HepG2 (cell line): ENCODE measurements at regions of chr1 and their contacts with region 1.

Region 1: GRCh38 chr1:152917794-152918193 is 9.4 kb downstream of the IVL start:
- DNase-seq: peak; percentile 30
- ATAC-seq: peak; percentile 40; the same call in 1 of the 3 replicates
- H3K4me3 ChIP-seq: no peak overlapping the region
- H3K27ac ChIP-seq: no peak overlapping the region
- H3K4me1 ChIP-seq: no peaks in the 10 kb centered on the region
- H3K27me3 ChIP-seq: 0 out of 5 replicates have a peak, but pooled peaks cover 0 to 2% of the 10 kb centered on the region in 2 experiments
- CTCF ChIP-seq: peak; percentile 53
- EP300 ChIP-seq: no peak
- POLR2A ChIP-seq: no peak
- RAD21 ChIP-seq: no peak

Region 2: DNA sequence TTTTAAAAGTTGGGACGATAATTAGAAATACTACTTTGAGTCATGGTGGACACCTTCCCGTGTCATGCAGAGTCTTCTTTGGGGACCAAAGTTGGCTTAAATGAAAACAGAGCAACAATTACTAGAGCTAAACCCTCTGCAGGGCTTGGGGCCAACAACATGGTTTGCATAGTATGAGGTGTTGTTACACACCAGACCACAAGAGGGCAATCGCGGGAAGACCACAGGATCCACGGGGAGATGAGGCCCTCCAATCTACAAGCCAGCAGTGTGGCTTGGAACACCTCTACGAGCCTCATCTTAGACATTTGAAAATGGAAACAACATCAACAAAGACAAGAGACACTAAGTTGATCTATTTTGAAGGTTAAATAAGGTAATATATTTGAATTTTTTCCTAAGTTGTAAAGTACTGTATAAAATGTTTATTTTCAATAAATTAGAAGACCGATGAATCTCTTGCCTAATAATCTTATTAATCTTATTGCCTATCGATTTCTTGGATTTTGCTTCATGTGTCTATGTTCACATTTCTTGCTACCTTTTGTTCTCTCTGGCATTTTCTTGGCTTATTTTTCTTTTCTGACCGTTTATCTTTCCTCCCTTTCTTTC is 47.9 kb before region 1 on chr1:
- CTCF ChIA-PET with region 1: no interaction called
- POLR2A ChIA-PET with region 1: no interaction called
- in situ Hi-C with region 1: no loop called
- intact Hi-C with region 1: no loop called
- DNase-seq: peak; percentile 60
- ATAC-seq: peak; percentile 83
- H3K4me3 ChIP-seq: no peak overlapping the region
- H3K27ac ChIP-seq: no peak overlapping the region
- H3K4me1 ChIP-seq: no peaks in the 10 kb centered on the region
- H3K27me3 ChIP-seq: no peaks in the 10 kb centered on the region
- CTCF ChIP-seq: peak; percentile 79
- EP300 ChIP-seq: no peak
- POLR2A ChIP-seq: no peak
- RAD21 ChIP-seq: peak; percentile 13; the same call in 1 of the 2 replicates

Region 3: GRCh38 chr1:153192697-153193096 is 274.9 kb after region 1 on chr1:
- CTCF ChIA-PET with region 1: no interaction called
- POLR2A ChIA-PET with region 1: no interaction called
- in situ Hi-C with region 1: no loop called
- intact Hi-C with region 1: loop called (anchors 2 kb)
- DNase-seq: peak; percentile 8
- ATAC-seq: peak; percentile 71
- H3K4me3 ChIP-seq: no peak overlapping the region
- H3K27ac ChIP-seq: no peak overlapping the region
- H3K4me1 ChIP-seq: no peaks in the 10 kb centered on the region
- H3K27me3 ChIP-seq: no peaks in the 10 kb centered on the region
- CTCF ChIP-seq: peak; percentile 58
- EP300 ChIP-seq: no peak
- POLR2A ChIP-seq: no peak
- RAD21 ChIP-seq: no peak

Region 4: GRCh38 chr1:153220606-153221303 is 303.0 kb after region 1 on chr1:
- CTCF ChIA-PET with region 1: interaction called, 6 read pairs
- POLR2A ChIA-PET with region 1: no interaction called
- in situ Hi-C with region 1: loop called (anchors 10 kb)
- intact Hi-C with region 1: no loop called
- DNase-seq: peak; percentile 8
- ATAC-seq: no peak
- H3K4me3 ChIP-seq: no peak overlapping the region
- H3K27ac ChIP-seq: no peak overlapping the region
- H3K4me1 ChIP-seq: no peaks in the 10 kb centered on the region
- H3K27me3 ChIP-seq: peaks cover 0 to 13% of the 10 kb centered on the region in 2 experiments; a peak in 3 of 5 replicates
- CTCF ChIP-seq: no peak
- EP300 ChIP-seq: no peak
- POLR2A ChIP-seq: no peak
- RAD21 ChIP-seq: no peak